Activated CD4-positive, alpha-beta T cell treated with anti-CD3 and anti-CD28 coated beads for 36 hours (primary cell): ENCODE measurements at regions of chr12 and their contacts with region 1.

Region 1: DNA sequence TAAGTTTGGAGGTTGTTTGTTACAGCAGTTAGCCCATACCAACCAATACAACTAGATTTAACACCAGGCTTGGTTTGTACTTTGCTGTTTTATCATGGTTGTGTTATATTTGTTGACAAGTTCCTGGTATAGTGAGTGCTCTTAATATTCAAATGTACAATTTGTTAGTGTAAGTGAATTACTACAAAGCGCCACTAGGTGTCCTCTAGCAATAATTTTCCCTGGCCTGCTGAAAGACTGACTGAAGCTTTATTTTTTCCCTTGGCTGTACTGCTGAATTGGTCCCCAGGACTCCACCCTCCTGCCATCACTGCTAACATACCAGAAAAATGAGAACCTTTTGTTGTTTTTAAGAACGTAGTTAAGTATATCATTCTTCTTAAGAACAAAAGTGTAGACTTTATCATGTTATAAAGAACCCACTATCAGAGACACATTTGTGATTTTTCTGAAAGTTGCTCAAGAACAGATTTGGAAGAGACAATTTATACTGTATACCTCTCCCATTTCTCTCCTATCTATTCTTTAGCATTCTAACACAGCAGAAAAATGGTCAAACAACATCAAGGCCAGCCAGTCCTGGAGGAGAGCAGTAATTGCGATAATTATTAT is 75.3 kb upstream of the FAR2 start:
- DNase-seq: peak; percentile 19
- ATAC-seq: peak; percentile 63
- H3K4me3 Mint-ChIP-seq: no peak overlapping the region
- H3K27ac Mint-ChIP-seq: no peak overlapping the region
- H3K4me1 Mint-ChIP-seq: no peaks in the 10 kb centered on the region
- H3K27me3 Mint-ChIP-seq: peaks cover 11% of the 10 kb centered on the region

Region 2: GRCh38 chr12:29024117-29024516 is 49.6 kb before region 1 on chr12:
- CTCF ChIA-PET with region 1: no interaction called
- POLR2A ChIA-PET with region 1: no interaction called
- intact Hi-C with region 1: no loop called
- DNase-seq: no peak
- ATAC-seq: no peak
- H3K4me3 Mint-ChIP-seq: no peak overlapping the region
- H3K27ac Mint-ChIP-seq: no peak overlapping the region
- H3K4me1 Mint-ChIP-seq: peaks cover 14% of the 10 kb centered on the region
- H3K27me3 Mint-ChIP-seq: peaks cover 7% of the 10 kb centered on the region

Region 3: GRCh38 chr12:29241821-29242591 is 168.3 kb after region 1 on chr12:
- CTCF ChIA-PET with region 1: no interaction called
- POLR2A ChIA-PET with region 1: no interaction called
- intact Hi-C with region 1: loop called in 1 of 2 experiments (anchors 5 kb)
- DNase-seq: peak; percentile 42
- ATAC-seq: peak; percentile 93
- H3K4me3 Mint-ChIP-seq: no peak overlapping the region
- H3K27ac Mint-ChIP-seq: no peak overlapping the region
- H3K4me1 Mint-ChIP-seq: peaks cover 21% of the 10 kb centered on the region
- H3K27me3 Mint-ChIP-seq: no peaks in the 10 kb centered on the region

Region 4: GRCh38 chr12:29317556-29318363 is 244.0 kb after region 1 on chr12:
- CTCF ChIA-PET with region 1: interaction called, 28 read pairs
- POLR2A ChIA-PET with region 1: interaction called, 4 read pairs
- intact Hi-C with region 1: loop called (anchors 1 kb)
- DNase-seq: peak; percentile 63
- ATAC-seq: peak; percentile 100
- H3K4me3 Mint-ChIP-seq: no peak overlapping the region
- H3K27ac Mint-ChIP-seq: no peak overlapping the region
- H3K4me1 Mint-ChIP-seq: peaks cover 6% of the 10 kb centered on the region
- H3K27me3 Mint-ChIP-seq: no peaks in the 10 kb centered on the region

Region 5: GRCh38 chr12:29374012-29374411 is 300.3 kb after region 1 on chr12:
- CTCF ChIA-PET with region 1: no interaction called
- POLR2A ChIA-PET with region 1: no interaction called
- intact Hi-C with region 1: no loop called
- DNase-seq: no peak
- ATAC-seq: no peak
- H3K4me3 Mint-ChIP-seq: no peak overlapping the region
- H3K27ac Mint-ChIP-seq: no peak overlapping the region
- H3K4me1 Mint-ChIP-seq: peaks cover 30% of the 10 kb centered on the region
- H3K27me3 Mint-ChIP-seq: no peaks in the 10 kb centered on the region